ENCODE measurements at regions of chr10 and their contacts with region 1.

Region 1: GRCh38 chr10:86376852-86377796 is 10.5 kb upstream of the GRID1 start:
- DNase-seq: peak; percentile 56
- ATAC-seq: peak; percentile 98
- H3K4me3 ChIP-seq: no peak overlapping the region
- H3K27ac ChIP-seq: no peak overlapping the region
- H3K4me1 ChIP-seq: peaks cover 0 to 9% of the 10 kb centered on the region in 2 experiments; a peak in 2 of 4 replicates
- H3K27me3 ChIP-seq: no peaks in the 10 kb centered on the region
- CTCF ChIP-seq: peak; percentile 92 to 96 (median 96)
- POLR2A ChIP-seq: no peak
- RAD21 ChIP-seq: peak; percentile 99

Region 2: DNA sequence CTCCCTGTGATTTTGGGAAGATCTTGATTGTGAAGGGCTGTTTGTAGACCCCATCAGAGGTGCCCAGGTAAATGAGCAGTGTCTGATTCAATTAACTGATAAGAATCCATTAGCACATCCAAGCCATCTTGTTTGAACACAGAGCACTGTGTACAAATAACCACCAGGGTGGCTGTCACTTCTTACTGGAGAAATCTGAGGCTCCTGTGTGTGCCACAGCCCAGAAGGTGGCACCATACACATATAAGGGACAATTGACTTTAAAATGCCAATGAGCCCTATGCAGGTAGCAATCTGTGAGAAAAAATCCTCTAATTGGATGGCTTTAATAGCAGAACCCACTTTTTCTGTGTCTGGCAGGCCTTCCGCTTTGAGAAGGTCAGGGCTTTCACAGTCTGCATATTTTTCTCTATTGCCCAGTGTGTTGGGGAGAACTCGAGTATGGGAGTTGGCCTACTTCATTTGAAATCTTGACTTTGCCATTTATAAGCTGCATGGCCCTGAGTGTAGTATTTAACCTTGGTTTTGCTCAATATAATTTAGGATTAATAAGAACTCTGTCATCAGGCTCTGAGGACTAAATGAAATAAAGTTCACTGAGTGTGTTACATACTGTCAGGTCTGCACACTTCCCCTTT is 1531.4 kb before region 1 on chr10:
- CTCF ChIA-PET with region 1: no interaction called
- POLR2A ChIA-PET with region 1: no interaction called
- RAD21 ChIA-PET with region 1: no interaction called
- intact Hi-C with region 1: loop called (anchors 10 kb)
- DNase-seq: peak; percentile 23
- ATAC-seq: peak; percentile 98
- H3K4me3 ChIP-seq: no peak overlapping the region
- H3K27ac ChIP-seq: no peak overlapping the region
- H3K4me1 ChIP-seq: no peaks in the 10 kb centered on the region
- H3K27me3 ChIP-seq: peaks cover 24% of the 10 kb centered on the region; the same call in 1 of the 2 replicates
- CTCF ChIP-seq: peak; percentile 54 to 71 (median 68); a peak in 5 of 6 replicates
- POLR2A ChIP-seq: no peak
- RAD21 ChIP-seq: peak; percentile 51

Region 3: DNA sequence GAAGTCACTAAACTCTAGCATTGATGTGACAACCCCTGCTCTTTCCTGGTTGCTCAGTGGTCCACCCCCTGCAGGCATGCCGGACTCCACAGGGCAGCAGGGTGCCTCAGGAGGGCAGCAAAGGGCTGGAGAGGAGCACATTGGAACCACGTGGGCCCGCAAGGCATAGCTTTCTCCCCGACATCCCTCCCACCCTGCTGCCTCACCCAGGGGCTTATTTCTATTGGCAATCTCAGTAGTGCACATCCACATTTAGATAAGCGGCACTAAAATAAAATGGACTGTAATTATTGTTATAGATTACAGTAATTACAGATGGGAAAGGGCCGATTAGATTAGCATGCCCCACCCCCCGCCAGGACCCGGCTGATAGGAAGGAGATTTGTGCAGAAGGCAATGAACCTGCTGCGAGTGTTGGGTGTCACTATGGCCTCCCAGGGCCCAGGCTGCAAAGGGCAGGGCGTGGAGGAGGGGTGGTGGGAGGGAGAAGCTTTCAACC is 590.7 kb before region 1 on chr10:
- CTCF ChIA-PET with region 1: no interaction called
- POLR2A ChIA-PET with region 1: no interaction called
- RAD21 ChIA-PET with region 1: no interaction called
- intact Hi-C with region 1: loop called (anchors 5 kb)
- DNase-seq: peak; percentile 4
- ATAC-seq: peak; percentile 91
- H3K4me3 ChIP-seq: no peak overlapping the region
- H3K27ac ChIP-seq: no peak overlapping the region
- H3K4me1 ChIP-seq: no peaks in the 10 kb centered on the region
- H3K27me3 ChIP-seq: no peaks in the 10 kb centered on the region
- CTCF ChIP-seq: peak; percentile 24 to 47 (median 37); a peak in 5 of 6 replicates
- POLR2A ChIP-seq: no peak
- RAD21 ChIP-seq: peak; percentile 58

Region 4: GRCh38 chr10:86100581-86101061 is 276.5 kb before region 1 on chr10:
- CTCF ChIA-PET with region 1: no interaction called
- POLR2A ChIA-PET with region 1: no interaction called
- RAD21 ChIA-PET with region 1: no interaction called
- intact Hi-C with region 1: loop called (anchors 1 kb)
- DNase-seq: peak; percentile 29
- ATAC-seq: peak; percentile 96
- H3K4me3 ChIP-seq: no peak overlapping the region
- H3K27ac ChIP-seq: no peak overlapping the region
- H3K4me1 ChIP-seq: no peaks in the 10 kb centered on the region
- H3K27me3 ChIP-seq: no peaks in the 10 kb centered on the region
- CTCF ChIP-seq: peak; percentile 71 to 76 (median 72); a peak in 5 of 6 replicates
- POLR2A ChIP-seq: no peak
- RAD21 ChIP-seq: peak; percentile 70

Region 5: GRCh38 chr10:86127274-86127819 is 249.8 kb before region 1 on chr10:
- CTCF ChIA-PET with region 1: no interaction called
- POLR2A ChIA-PET with region 1: no interaction called
- RAD21 ChIA-PET with region 1: no interaction called
- intact Hi-C with region 1: no loop called
- DNase-seq: no peak
- ATAC-seq: no peak
- H3K4me3 ChIP-seq: no peak overlapping the region
- H3K27ac ChIP-seq: no peak overlapping the region
- H3K4me1 ChIP-seq: peaks cover 0 to 7% of the 10 kb centered on the region in 2 experiments; a peak in 2 of 4 replicates
- H3K27me3 ChIP-seq: no peaks in the 10 kb centered on the region
- CTCF ChIP-seq: no peak
- POLR2A ChIP-seq: no peak
- RAD21 ChIP-seq: no peak

Region 6: DNA sequence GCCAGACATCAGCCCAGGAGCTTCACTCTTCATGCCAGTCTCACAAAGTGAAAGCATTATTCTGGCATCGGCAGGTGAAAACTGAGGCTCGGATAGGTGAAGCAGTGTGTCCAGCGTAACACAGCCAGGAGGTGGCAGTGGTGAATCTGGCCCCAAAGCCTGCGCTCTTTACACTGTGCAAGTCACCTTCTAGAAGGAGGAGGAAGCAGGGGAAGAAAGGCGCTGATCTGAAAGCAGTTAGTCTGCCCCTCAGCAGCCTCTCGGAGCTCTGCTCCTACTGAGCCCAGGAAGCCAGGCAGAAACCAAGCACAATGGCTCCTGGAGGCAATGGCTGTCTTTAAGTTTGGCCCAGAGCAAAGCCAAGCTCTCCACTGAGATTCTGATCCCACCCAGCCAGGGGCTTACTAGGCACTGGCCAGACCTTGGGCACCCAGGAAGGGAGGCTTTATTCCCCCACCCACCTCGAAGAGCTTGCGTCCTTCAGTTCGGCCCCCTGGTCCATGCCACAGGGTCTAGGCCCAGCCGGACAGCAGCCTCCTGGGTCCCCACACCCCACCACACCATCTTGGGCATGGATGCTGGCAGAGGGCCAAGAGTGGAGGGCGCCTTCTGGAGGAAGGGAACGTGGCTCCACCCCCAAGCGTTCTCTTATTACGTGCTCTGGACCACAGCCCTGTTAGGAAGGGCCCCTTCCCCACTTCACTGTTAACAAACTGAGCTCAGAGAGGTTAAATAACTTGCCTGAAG is 115.0 kb before region 1 on chr10:
- CTCF ChIA-PET with region 1: no interaction called
- POLR2A ChIA-PET with region 1: no interaction called
- RAD21 ChIA-PET with region 1: no interaction called
- intact Hi-C with region 1: loop called (anchors 2 kb)
- DNase-seq: no peak
- ATAC-seq: peak; percentile 97
- H3K4me3 ChIP-seq: no peak overlapping the region
- H3K27ac ChIP-seq: no peak overlapping the region
- H3K4me1 ChIP-seq: peaks cover 0 to 8% of the 10 kb centered on the region in 2 experiments; a peak in 2 of 4 replicates
- H3K27me3 ChIP-seq: no peaks in the 10 kb centered on the region
- CTCF ChIP-seq: peak; percentile 61 to 69 (median 65)
- POLR2A ChIP-seq: no peak
- RAD21 ChIP-seq: peak; percentile 72

Region 7: DNA sequence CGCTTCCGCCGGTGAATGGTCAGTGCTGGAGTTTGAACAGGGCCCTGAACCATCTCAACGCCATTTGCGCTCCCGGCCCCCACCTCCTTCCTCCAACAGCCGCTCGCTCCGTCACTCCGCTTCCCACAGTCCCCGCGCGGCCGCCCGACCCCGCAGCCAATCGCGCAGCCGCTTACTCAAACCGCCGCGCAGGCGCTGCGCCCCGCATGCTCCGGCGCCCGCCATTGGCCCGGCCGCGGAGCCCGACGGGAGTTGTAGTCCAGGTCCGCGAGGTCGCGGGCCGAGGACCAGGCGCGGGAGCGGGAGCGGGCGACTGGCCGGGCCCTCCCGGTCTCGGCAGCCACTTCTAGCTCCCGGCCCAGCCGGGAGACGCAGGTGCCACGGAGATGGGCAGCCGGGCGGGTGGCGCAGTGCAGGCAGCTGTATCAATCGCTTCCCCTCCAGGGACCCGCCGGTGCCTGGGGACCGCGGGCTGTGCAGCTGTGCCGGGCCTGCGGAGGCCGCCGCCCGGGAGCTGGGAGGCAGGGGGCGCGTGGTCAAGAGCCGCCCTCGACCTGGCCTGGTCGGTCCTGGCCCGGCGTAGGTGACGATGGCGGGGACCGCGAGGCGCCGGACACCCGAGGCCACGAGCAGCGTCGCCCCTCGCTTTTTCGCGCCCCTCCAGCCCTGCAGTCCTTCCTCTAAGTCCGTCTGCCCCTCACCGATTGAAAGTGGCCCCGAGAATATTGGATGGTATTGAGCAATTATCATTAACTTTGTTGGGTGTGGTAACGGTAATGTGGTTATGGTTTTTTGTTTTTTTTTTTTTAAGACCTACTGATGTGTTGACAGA is 144.8 kb after region 1 on chr10 and contains the start of gene WAPL:
- CTCF ChIA-PET with region 1: no interaction called
- POLR2A ChIA-PET with region 1: no interaction called
- RAD21 ChIA-PET with region 1: no interaction called
- intact Hi-C with region 1: no loop called
- DNase-seq: peak; percentile 81
- ATAC-seq: peak; percentile 93
- H3K4me3 ChIP-seq: peak within 1 kb of the TSS; percentile 82 to 84
- H3K27ac ChIP-seq: peak within 1 kb of the TSS; percentile 85
- H3K4me1 ChIP-seq: peaks cover 12 to 22% of the 10 kb centered on the region in 2 experiments; a peak in 3 of 4 replicates
- H3K27me3 ChIP-seq: no peaks in the 10 kb centered on the region
- CTCF ChIP-seq: no peak
- POLR2A ChIP-seq: peak; percentile 39
- RAD21 ChIP-seq: no peak
- total RNA-seq, gene WAPL: 37.5 TPM